HCT116 (cell line): ENCODE measurements at regions of chr2 and their contacts with region 1.

Region 1: DNA sequence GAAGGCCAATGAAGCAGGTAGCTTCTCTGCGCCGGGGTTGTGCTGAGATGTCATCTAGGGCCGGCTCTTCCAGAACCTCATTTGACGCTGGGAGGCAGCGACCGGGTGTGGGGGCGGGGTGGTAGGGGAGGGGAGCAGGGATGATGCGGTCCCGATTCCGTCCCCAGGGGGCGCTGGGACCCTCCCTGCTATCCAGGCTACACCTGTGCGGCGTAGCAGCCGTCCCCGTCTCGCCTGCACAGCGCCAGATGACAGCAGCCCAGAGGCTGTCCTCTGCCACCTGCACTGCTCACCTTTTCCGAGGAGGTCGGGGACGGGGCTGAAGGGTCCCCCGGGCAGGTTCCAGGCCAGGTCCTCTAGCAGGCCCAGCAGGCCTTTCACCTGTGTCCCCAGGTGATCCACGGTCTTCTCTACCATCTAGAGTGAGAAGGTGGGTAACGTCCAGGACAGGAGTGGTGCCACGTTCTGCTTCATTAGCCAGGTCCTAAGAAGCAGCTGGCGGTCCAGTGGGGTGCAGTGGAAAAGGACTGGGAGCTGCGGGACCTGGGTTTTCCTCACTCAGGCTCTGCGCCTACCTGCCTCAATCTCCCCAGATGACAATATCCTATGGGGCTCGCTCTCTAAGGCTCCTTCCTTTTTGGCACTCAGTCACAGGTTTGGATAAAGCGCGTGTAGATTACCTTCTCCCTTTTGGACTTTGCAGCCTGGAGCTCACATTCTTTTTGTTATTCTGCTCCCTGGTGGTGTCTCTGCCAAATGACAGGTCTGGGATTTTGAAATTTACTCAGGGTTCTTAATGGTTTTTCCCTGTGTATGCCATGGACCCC is 56.0 kb upstream of the RAB6C start:
- DNase-seq: peak; percentile 35
- ATAC-seq: peak; percentile 87
- H3K4me3 ChIP-seq: no peak overlapping the region
- H3K27ac ChIP-seq: no peak overlapping the region
- H3K4me1 ChIP-seq: peaks cover 2 to 5% of the 10 kb centered on the region in 2 experiments; a peak in 1 of 4 replicates
- H3K27me3 ChIP-seq: peaks cover 10% of the 10 kb centered on the region; the same call in 1 of the 2 replicates
- CTCF ChIP-seq: peak; percentile 45 to 56 (median 53); a peak in 5 of 6 replicates
- POLR2A ChIP-seq: no peak
- RAD21 ChIP-seq: peak; percentile 74

Region 2: GRCh38 chr2:128069769-128070168 is 1853.7 kb before region 1 on chr2:
- CTCF ChIA-PET with region 1: no interaction called
- POLR2A ChIA-PET with region 1: no interaction called
- RAD21 ChIA-PET with region 1: no interaction called
- intact Hi-C with region 1: loop called (anchors 10 kb)
- DNase-seq: no peak
- ATAC-seq: no peak
- H3K4me3 ChIP-seq: no peak overlapping the region
- H3K27ac ChIP-seq: no peak overlapping the region
- H3K4me1 ChIP-seq: no peaks in the 10 kb centered on the region
- H3K27me3 ChIP-seq: no peaks in the 10 kb centered on the region
- CTCF ChIP-seq: no peak
- POLR2A ChIP-seq: no peak
- RAD21 ChIP-seq: no peak

Region 3: DNA sequence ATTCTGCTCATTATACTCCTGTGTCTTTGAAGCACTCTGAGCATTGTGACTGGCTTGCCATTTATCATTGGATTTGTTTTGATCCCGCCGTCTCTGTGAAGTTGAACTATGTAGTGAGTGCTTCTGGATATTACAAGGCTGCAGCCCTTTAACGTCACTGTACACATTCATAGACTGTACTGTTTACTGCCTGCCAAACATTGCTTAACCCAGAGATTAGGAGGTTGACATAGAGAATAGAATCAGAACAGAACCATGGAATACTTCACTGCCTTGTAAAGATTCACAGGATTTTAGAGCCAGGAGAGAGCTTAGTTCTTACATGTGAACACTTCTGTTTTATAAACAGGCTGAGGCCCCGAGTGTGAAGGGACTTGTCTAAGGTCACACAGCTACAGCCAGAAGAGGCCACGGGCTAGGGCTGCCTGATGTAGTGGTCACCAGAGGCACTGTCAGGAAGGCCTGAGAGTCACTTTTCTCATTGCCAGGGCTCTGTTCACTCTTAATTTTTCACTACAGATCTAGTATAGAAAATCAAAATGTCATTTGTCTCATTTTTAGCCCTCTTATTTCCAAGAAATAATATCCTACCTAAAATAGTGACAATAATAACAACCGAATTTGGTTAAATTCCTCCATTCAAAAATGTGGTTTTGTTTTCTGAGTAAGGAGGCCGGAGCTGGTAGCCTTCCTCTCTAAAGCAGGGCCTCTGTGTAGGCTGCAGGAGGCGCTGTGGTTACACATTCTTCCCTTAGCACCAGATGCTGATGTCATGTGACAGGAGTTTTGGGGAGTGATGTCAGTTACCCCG is 1744.6 kb before region 1 on chr2:
- CTCF ChIA-PET with region 1: no interaction called
- POLR2A ChIA-PET with region 1: no interaction called
- RAD21 ChIA-PET with region 1: no interaction called
- intact Hi-C with region 1: loop called (anchors 10 kb)
- DNase-seq: peak; percentile 10
- ATAC-seq: peak; percentile 92
- H3K4me3 ChIP-seq: no peak overlapping the region
- H3K27ac ChIP-seq: no peak overlapping the region
- H3K4me1 ChIP-seq: no peaks in the 10 kb centered on the region
- H3K27me3 ChIP-seq: no peaks in the 10 kb centered on the region
- CTCF ChIP-seq: peak; percentile 57 to 88 (median 81); a peak in 5 of 6 replicates
- POLR2A ChIP-seq: no peak
- RAD21 ChIP-seq: peak; percentile 79

Region 4: DNA sequence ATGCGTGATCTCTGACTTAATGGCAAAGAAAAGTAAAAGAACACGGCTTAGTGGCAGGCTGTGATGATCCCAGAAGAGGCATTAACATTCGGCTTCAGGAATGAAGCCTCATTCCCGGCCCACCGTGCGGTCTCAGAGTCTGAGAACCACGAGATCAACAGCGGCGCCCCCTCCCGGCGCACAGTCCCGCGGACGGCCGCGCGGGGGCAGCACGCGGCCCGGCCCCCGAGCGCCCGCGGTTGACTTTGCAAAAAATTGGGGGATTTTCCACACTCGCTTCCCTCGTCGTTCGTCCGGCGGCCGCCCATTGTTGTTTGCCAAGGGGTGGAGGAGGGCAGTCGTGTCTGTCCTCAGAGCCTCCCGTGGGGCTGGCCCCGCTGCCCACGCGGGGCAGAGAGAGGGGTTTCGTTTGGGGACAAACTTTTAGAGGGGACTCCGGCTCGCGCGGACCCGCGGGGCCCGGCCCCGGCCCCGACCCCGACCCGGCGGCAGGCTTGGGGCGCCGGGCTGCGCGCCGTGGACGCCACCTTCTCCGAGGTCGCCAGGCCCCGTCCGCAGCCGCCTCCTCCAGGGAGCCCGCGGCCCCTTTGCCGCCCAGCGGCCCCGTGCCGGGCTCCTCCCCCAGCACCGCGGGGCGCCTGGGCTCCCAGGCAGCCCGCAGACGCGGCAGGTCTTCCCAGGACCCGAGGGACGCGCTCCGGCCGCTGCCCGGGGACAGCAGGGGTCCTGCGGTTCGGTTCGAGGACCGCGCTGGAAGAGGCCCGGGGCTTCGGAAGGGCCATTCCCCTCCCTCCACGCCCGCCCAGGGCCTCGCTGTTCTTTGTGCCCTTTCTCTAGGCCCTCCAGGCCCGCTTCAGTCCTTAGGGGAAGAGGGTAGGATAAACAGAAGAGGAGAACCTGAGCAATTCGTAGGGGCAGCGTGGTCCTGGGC is 1601.4 kb before region 1 on chr2:
- CTCF ChIA-PET with region 1: no interaction called
- POLR2A ChIA-PET with region 1: no interaction called
- RAD21 ChIA-PET with region 1: no interaction called
- intact Hi-C with region 1: loop called (anchors 5 kb)
- DNase-seq: peak; percentile 51
- ATAC-seq: peak; percentile 67
- H3K4me3 ChIP-seq: peak overlapping the region; percentile 58 to 63
- H3K27ac ChIP-seq: peak overlapping the region; percentile 89
- H3K4me1 ChIP-seq: peaks cover 1 to 21% of the 10 kb centered on the region in 2 experiments; a peak in 3 of 4 replicates
- H3K27me3 ChIP-seq: no peaks in the 10 kb centered on the region
- CTCF ChIP-seq: peak; percentile 31 to 82 (median 75); a peak in 5 of 6 replicates
- POLR2A ChIP-seq: no peak
- RAD21 ChIP-seq: peak; percentile 61

Region 5: GRCh38 chr2:128736689-128737545 is 1186.6 kb before region 1 on chr2:
- CTCF ChIA-PET with region 1: interaction called, 3 read pairs
- POLR2A ChIA-PET with region 1: no interaction called
- RAD21 ChIA-PET with region 1: no interaction called
- intact Hi-C with region 1: loop called (anchors 5 kb)
- DNase-seq: peak; percentile 54
- ATAC-seq: peak; percentile 92
- H3K4me3 ChIP-seq: no peak overlapping the region
- H3K27ac ChIP-seq: no peak overlapping the region
- H3K4me1 ChIP-seq: no peaks in the 10 kb centered on the region
- H3K27me3 ChIP-seq: 0 out of 2 replicates have a peak, but pooled peaks cover 11% of the 10 kb centered on the region
- CTCF ChIP-seq: peak; percentile 68 to 100 (median 98)
- POLR2A ChIP-seq: no peak
- RAD21 ChIP-seq: peak; percentile 69

Region 6: GRCh38 chr2:129764376-129765325 is 158.8 kb before region 1 on chr2:
- CTCF ChIA-PET with region 1: interaction called, 8 read pairs
- POLR2A ChIA-PET with region 1: no interaction called
- RAD21 ChIA-PET with region 1: interaction called in 1 of 2 experiments, 3 read pairs
- intact Hi-C with region 1: loop called (anchors 2 kb)
- DNase-seq: peak; percentile 8
- ATAC-seq: peak; percentile 88
- H3K4me3 ChIP-seq: no peak overlapping the region
- H3K27ac ChIP-seq: no peak overlapping the region
- H3K4me1 ChIP-seq: no peaks in the 10 kb centered on the region
- H3K27me3 ChIP-seq: peaks cover 24% of the 10 kb centered on the region
- CTCF ChIP-seq: peak; percentile 14 to 55 (median 45); a peak in 5 of 6 replicates
- POLR2A ChIP-seq: no peak
- RAD21 ChIP-seq: peak; percentile 27; the same call in 1 of the 2 replicates